CD8-positive, alpha-beta T cell (primary cell): ENCODE measurements at regions of chr1 and their contacts with region 1.

Region 1: GRCh38 chr1:160567858-160568682 is 11.2 kb downstream of the CD84 start:
- DNase-seq: peak; percentile 35 to 87 (median 77)
- ATAC-seq: peak; percentile 95
- H3K4me3 ChIP-seq: peak overlapping the region in 1 of 2 experiments; percentile 9
- H3K4me3 Mint-ChIP-seq: peak overlapping the region; percentile 59
- H3K27ac ChIP-seq: peak overlapping the region; percentile 55 to 80
- H3K27ac Mint-ChIP-seq: peak overlapping the region; percentile 95
- H3K4me1 ChIP-seq: peaks cover 93% of the 10 kb centered on the region
- H3K4me1 Mint-ChIP-seq: peaks cover 95% of the 10 kb centered on the region
- H3K27me3 ChIP-seq: no peaks in the 10 kb centered on the region
- H3K27me3 Mint-ChIP-seq: no peaks in the 10 kb centered on the region
- CTCF ChIP-seq: no peak

Region 2: DNA sequence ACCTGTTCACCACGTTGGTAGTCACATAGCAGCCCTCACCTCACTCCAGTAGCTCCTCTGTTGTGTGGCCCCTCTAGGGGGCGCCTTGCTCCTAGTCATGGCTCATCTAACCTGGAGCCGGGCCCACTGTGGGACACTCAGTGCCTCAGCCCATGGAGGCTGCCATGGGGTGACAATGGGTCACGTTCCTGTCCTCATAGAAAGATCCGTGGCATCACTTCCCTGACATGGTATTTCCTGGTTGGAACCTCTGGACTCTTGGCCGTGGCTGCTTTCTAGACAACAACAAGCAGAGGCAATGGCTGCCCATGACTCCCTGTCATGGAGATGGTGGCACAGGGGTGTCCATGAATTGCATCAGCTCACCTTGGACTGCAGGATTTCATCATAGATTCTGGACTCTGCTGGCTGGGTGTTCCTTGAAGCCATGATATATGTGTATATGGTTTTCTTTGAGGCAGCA is 17.5 kb before region 1 on chr1:
- CTCF ChIA-PET with region 1: interaction called, 15 read pairs
- POLR2A ChIA-PET with region 1: interaction called, 11 read pairs
- intact Hi-C with region 1: no loop called
- DNase-seq: peak; percentile 25 to 80 (median 67)
- ATAC-seq: peak; percentile 78
- H3K4me3 ChIP-seq: no peak overlapping the region
- H3K4me3 Mint-ChIP-seq: no peak overlapping the region
- H3K27ac ChIP-seq: peak overlapping the region in 1 of 2 experiments; percentile 13
- H3K27ac Mint-ChIP-seq: peak overlapping the region; percentile 13
- H3K4me1 ChIP-seq: no peaks in the 10 kb centered on the region
- H3K4me1 Mint-ChIP-seq: peaks cover 32% of the 10 kb centered on the region
- H3K27me3 ChIP-seq: no peaks in the 10 kb centered on the region
- H3K27me3 Mint-ChIP-seq: no peaks in the 10 kb centered on the region
- CTCF ChIP-seq: peak; percentile 51